ENCODE measurements at regions of chr1 and their contacts with region 1.

Region 1: GRCh38 chr1:26321315-26322041 is 3.7 kb downstream of the CD52 start:
- DNase-seq: peak; percentile 91 to 99 (median 93)
- ATAC-seq: peak; percentile 73
- H3K4me3 ChIP-seq: peak overlapping the region; percentile 87 to 93
- H3K4me3 Mint-ChIP-seq: peak overlapping the region; percentile 88
- H3K27ac ChIP-seq: peak overlapping the region in 1 of 2 experiments; percentile 46
- H3K27ac Mint-ChIP-seq: peak overlapping the region; percentile 96
- H3K4me1 ChIP-seq: peaks cover 41% of the 10 kb centered on the region
- H3K4me1 Mint-ChIP-seq: peaks cover 53% of the 10 kb centered on the region
- H3K27me3 ChIP-seq: no peaks in the 10 kb centered on the region
- H3K27me3 Mint-ChIP-seq: no peaks in the 10 kb centered on the region
- CTCF ChIP-seq: peak; percentile 86

Region 2: DNA sequence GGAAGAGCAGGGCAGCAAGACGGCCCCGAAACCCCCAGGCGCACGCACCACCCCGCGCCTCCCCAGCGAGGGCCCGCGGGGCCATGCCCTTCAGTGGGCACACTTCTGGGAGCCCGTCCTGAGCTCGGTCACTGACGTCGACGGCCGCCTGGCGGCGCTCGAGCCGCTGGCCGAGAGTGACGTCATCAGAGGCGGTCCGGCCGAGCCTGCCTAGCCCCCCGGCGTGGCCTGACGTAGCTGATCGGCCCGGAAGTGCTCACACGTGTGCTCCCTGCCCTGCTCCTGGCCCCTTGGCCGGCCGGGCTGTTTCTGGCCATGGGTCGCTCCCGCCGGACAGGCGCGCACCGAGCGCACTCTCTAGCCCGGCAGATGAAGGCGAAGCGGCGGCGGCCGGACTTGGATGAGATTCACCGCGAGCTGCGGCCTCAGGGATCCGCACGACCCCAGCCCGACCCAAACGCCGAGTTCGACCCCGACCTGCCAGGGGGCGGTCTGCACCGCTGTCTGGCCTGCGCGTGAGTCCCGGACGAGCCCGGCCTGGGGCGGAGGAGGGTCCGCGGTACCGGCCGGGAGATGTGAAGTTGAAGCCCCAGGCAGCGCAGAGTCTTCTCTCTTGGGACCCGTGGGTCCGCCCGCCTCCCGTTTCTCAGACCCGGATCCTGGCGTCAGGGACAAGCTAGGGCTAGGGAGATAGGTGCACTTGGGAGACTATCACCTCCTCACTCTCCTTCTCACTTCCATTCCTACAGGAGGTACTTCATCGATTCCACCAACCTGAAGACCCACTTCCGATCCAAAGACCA is 151.6 kb before region 1 on chr1 and contains the start of gene ZNF593:
- CTCF ChIA-PET with region 1: interaction called, 4 read pairs
- POLR2A ChIA-PET with region 1: no interaction called
- intact Hi-C with region 1: loop called (anchors 1 kb)
- DNase-seq: peak; percentile 69 to 91 (median 85)
- ATAC-seq: peak; percentile 92
- H3K4me3 ChIP-seq: peak within 1 kb of the TSS; percentile 85 to 89
- H3K4me3 Mint-ChIP-seq: peak within 1 kb of the TSS; percentile 87
- H3K27ac ChIP-seq: peak within 1 kb of the TSS; percentile 77 to 78
- H3K27ac Mint-ChIP-seq: peak within 1 kb of the TSS; percentile 88
- H3K4me1 ChIP-seq: peaks cover 11% of the 10 kb centered on the region
- H3K4me1 Mint-ChIP-seq: peaks cover 12% of the 10 kb centered on the region
- H3K27me3 ChIP-seq: no peaks in the 10 kb centered on the region
- H3K27me3 Mint-ChIP-seq: no peaks in the 10 kb centered on the region
- CTCF ChIP-seq: peak; percentile 74
- total RNA-seq, gene ZNF593: 8.1 to 8.8 TPM

Region 3: DNA sequence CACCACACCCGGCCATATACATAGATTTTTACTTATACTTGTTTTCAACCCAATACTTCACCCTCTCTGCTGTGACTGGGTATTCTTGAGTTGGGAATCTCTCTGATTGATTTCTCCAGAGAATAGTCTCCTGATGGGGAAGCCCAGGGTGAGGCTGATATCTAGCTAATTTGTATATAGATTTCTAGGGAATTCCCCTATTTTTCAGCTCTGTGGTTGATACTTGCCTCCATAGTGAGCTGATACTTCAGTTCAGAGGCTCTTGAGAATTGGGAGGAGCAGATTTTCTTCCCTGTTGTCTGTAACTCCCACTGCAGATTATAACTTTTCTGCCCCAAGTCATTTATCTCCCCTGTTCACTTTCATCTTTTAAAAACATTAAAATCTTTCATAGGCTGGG is 56.1 kb before region 1 on chr1:
- CTCF ChIA-PET with region 1: interaction called, 24 read pairs
- POLR2A ChIA-PET with region 1: interaction called, 3 read pairs
- intact Hi-C with region 1: no loop called
- DNase-seq: no peak
- ATAC-seq: no peak
- H3K4me3 ChIP-seq: no peak overlapping the region
- H3K4me3 Mint-ChIP-seq: no peak overlapping the region
- H3K27ac ChIP-seq: no peak overlapping the region
- H3K27ac Mint-ChIP-seq: no peak overlapping the region
- H3K4me1 ChIP-seq: no peaks in the 10 kb centered on the region
- H3K4me1 Mint-ChIP-seq: no peaks in the 10 kb centered on the region
- H3K27me3 ChIP-seq: no peaks in the 10 kb centered on the region
- H3K27me3 Mint-ChIP-seq: no peaks in the 10 kb centered on the region
- CTCF ChIP-seq: no peak

Region 4: GRCh38 chr1:26306290-26307229 is 14.9 kb before region 1 on chr1 and contains the start of gene UBXN11:
- CTCF ChIA-PET with region 1: interaction called, 87 read pairs
- POLR2A ChIA-PET with region 1: interaction called, 69 read pairs
- intact Hi-C with region 1: loop called (anchors 1 kb)
- DNase-seq: peak; percentile 82 to 97 (median 92)
- ATAC-seq: peak; percentile 99
- H3K4me3 ChIP-seq: peak within 1 kb of the TSS; percentile 84 to 91
- H3K4me3 Mint-ChIP-seq: peak within 1 kb of the TSS; percentile 99
- H3K27ac ChIP-seq: peak within 1 kb of the TSS; percentile 73 to 83
- H3K27ac Mint-ChIP-seq: peak within 1 kb of the TSS; percentile 95
- H3K4me1 ChIP-seq: peaks cover 30% of the 10 kb centered on the region
- H3K4me1 Mint-ChIP-seq: peaks cover 31% of the 10 kb centered on the region
- H3K27me3 ChIP-seq: no peaks in the 10 kb centered on the region
- H3K27me3 Mint-ChIP-seq: no peaks in the 10 kb centered on the region
- CTCF ChIP-seq: no peak
- total RNA-seq, gene UBXN11: 28.6 to 33.8 TPM

Region 5: GRCh38 chr1:26358411-26359384 is 37.2 kb after region 1 on chr1:
- CTCF ChIA-PET with region 1: interaction called, 46 read pairs
- POLR2A ChIA-PET with region 1: interaction called, 9 read pairs
- intact Hi-C with region 1: loop called (anchors 1 to 5 kb)
- DNase-seq: peak; percentile 52 to 90 (median 72)
- ATAC-seq: peak; percentile 81
- H3K4me3 ChIP-seq: no peak overlapping the region
- H3K4me3 Mint-ChIP-seq: peak overlapping the region; percentile 42
- H3K27ac ChIP-seq: no peak overlapping the region
- H3K27ac Mint-ChIP-seq: peak overlapping the region; percentile 84
- H3K4me1 ChIP-seq: peaks cover 36% of the 10 kb centered on the region
- H3K4me1 Mint-ChIP-seq: peaks cover 40% of the 10 kb centered on the region
- H3K27me3 ChIP-seq: peaks cover 0 to 18% of the 10 kb centered on the region in 2 experiments
- H3K27me3 Mint-ChIP-seq: peaks cover 13% of the 10 kb centered on the region
- CTCF ChIP-seq: no peak

Region 6: GRCh38 chr1:26391450-26391849 is 70.0 kb after region 1 on chr1:
- CTCF ChIA-PET with region 1: interaction called, 27 read pairs
- POLR2A ChIA-PET with region 1: interaction called, 5 read pairs
- intact Hi-C with region 1: loop called (anchors 1 to 2 kb)
- DNase-seq: peak in 7 of 9 experiments; percentile 32 to 80 (median 51)
- ATAC-seq: peak; percentile 72
- H3K4me3 ChIP-seq: no peak overlapping the region
- H3K4me3 Mint-ChIP-seq: no peak overlapping the region
- H3K27ac ChIP-seq: no peak overlapping the region
- H3K27ac Mint-ChIP-seq: no peak overlapping the region
- H3K4me1 ChIP-seq: peaks cover 27% of the 10 kb centered on the region
- H3K4me1 Mint-ChIP-seq: peaks cover 30% of the 10 kb centered on the region
- H3K27me3 ChIP-seq: peaks cover 0 to 6% of the 10 kb centered on the region in 2 experiments
- H3K27me3 Mint-ChIP-seq: no peaks in the 10 kb centered on the region
- CTCF ChIP-seq: peak; percentile 44

Region 7: GRCh38 chr1:26582836-26583460 is 261.5 kb after region 1 on chr1:
- CTCF ChIA-PET with region 1: no interaction called
- POLR2A ChIA-PET with region 1: no interaction called
- intact Hi-C with region 1: no loop called
- DNase-seq: peak in 2 of 9 experiments; percentile 12 to 25
- ATAC-seq: no peak
- H3K4me3 ChIP-seq: no peak overlapping the region
- H3K4me3 Mint-ChIP-seq: no peak overlapping the region
- H3K27ac ChIP-seq: no peak overlapping the region
- H3K27ac Mint-ChIP-seq: no peak overlapping the region
- H3K4me1 ChIP-seq: no peaks in the 10 kb centered on the region
- H3K4me1 Mint-ChIP-seq: peaks cover 8% of the 10 kb centered on the region
- H3K27me3 ChIP-seq: no peaks in the 10 kb centered on the region
- H3K27me3 Mint-ChIP-seq: no peaks in the 10 kb centered on the region
- CTCF ChIP-seq: no peak

Region 8: GRCh38 chr1:27234049-27234882 is 912.8 kb after region 1 on chr1 and contains the start of gene WDTC1:
- CTCF ChIA-PET with region 1: no interaction called
- POLR2A ChIA-PET with region 1: no interaction called
- intact Hi-C with region 1: loop called in 1 of 2 experiments (anchors 5 kb)
- DNase-seq: peak; percentile 97 to 99 (median 98)
- ATAC-seq: peak; percentile 90
- H3K4me3 ChIP-seq: peak within 1 kb of the TSS; percentile 58 to 66
- H3K4me3 Mint-ChIP-seq: peak within 1 kb of the TSS; percentile 99
- H3K27ac ChIP-seq: peak within 1 kb of the TSS; percentile 74 to 93
- H3K27ac Mint-ChIP-seq: peak within 1 kb of the TSS; percentile 95
- H3K4me1 ChIP-seq: peaks cover 25% of the 10 kb centered on the region
- H3K4me1 Mint-ChIP-seq: peaks cover 37% of the 10 kb centered on the region
- H3K27me3 ChIP-seq: no peaks in the 10 kb centered on the region
- H3K27me3 Mint-ChIP-seq: no peaks in the 10 kb centered on the region
- CTCF ChIP-seq: no peak
- total RNA-seq, gene WDTC1: 17.8 to 18.1 TPM

Measured in CD8-positive, alpha-beta T cell (primary cell).